ENCODE measurements at regions of chr16 and their contacts with region 1.

Region 1: GRCh38 chr16:29745853-29746345 is at the start of gene C16orf54:
- DNase-seq: peak; percentile 98
- H3K4me3 Mint-ChIP-seq: peak within 1 kb of the TSS; percentile 98
- H3K27ac Mint-ChIP-seq: peak within 1 kb of the TSS; percentile 93
- H3K4me1 Mint-ChIP-seq: peaks cover 67% of the 10 kb centered on the region
- H3K27me3 Mint-ChIP-seq: no peaks in the 10 kb centered on the region
- total RNA-seq, gene C16orf54: 94.6 to 99.2 TPM

Region 2: GRCh38 chr16:29729116-29729521 is 16.8 kb before region 1 on chr16:
- CTCF ChIA-PET with region 1: no interaction called
- POLR2A ChIA-PET with region 1: interaction called, 35 read pairs
- DNase-seq: no peak
- H3K4me3 Mint-ChIP-seq: no peak overlapping the region
- H3K27ac Mint-ChIP-seq: no peak overlapping the region
- H3K4me1 Mint-ChIP-seq: peaks cover 30% of the 10 kb centered on the region
- H3K27me3 Mint-ChIP-seq: peaks cover 16% of the 10 kb centered on the region

Region 3: GRCh38 chr16:29757950-29758466 is 12.1 kb after region 1 on chr16:
- CTCF ChIA-PET with region 1: interaction called, 5 read pairs
- POLR2A ChIA-PET with region 1: interaction called, 28 read pairs
- DNase-seq: no peak
- H3K4me3 Mint-ChIP-seq: no peak overlapping the region
- H3K27ac Mint-ChIP-seq: no peak overlapping the region
- H3K4me1 Mint-ChIP-seq: peaks cover 19% of the 10 kb centered on the region
- H3K27me3 Mint-ChIP-seq: no peaks in the 10 kb centered on the region

Region 4: DNA sequence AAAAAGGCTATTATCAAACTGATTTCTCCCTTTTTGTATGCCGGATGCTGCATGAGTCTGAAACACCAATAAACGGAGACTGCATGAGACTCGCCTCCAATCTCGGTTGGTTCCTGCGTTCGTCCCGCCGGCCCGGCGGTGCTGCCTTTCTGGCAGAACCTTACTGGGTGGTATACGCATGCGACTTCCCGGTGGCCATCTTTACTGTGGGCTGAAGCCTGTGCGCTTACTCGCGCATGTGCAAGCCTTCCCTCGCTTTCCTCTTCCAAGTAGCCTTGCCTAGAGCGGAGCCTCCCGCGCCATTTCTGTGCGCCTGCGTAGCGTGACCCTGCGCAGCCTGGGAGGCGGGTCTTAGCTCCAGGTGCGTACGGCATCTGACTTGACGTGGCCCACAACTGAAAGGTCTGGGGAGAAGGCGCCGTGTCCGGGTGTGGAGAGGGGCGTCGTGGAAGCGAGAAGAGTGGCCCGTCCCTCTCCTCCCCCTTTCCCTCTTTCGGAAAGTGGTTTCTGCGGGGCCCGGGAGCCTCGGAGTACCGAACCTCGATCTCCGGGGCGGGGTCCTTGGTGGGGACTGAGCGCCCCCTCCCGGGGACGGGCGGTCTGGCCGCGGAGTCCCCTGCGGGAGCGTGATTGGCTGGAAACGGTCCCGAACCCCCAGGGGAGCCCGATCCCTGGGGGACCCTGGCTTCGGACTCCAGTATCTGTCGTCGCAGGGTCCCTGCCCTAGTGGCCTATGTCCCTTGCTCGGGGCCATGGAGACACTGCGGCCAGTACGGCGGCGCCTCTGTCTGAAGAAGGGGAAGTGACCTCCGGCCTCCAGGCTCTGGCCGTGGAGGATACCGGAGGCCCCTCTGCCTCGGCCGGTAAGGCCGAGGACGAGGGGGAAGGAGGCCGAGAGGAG is 70.1 kb after region 1 on chr16 and contains the start of gene PAGR1:
- CTCF ChIA-PET with region 1: interaction called, 3 read pairs
- POLR2A ChIA-PET with region 1: interaction called, 11 read pairs
- DNase-seq: peak; percentile 99
- H3K4me3 Mint-ChIP-seq: peak within 1 kb of the TSS; percentile 94
- H3K27ac Mint-ChIP-seq: peak within 1 kb of the TSS; percentile 94
- H3K4me1 Mint-ChIP-seq: peaks cover 72% of the 10 kb centered on the region
- H3K27me3 Mint-ChIP-seq: peaks cover 11% of the 10 kb centered on the region
- total RNA-seq, gene PAGR1: 26.6 to 28.4 TPM

Measured in activated CD4-positive, alpha-beta memory T cell treated with anti-CD3 and anti-CD28 coated beads, Interleukin-2, amount 10 ng/mL, durations not matched to agents 7 days and 5 days (primary cell).